BJ (cell line): ENCODE measurements at regions of chr2 and their contacts with region 1.

Region 1: GRCh38 chr2:17851731-17852585 is 26.5 kb upstream of the KCNS3 start:
- DNase-seq: peak; percentile 11
- H3K4me3 ChIP-seq: no peak overlapping the region
- H3K27me3 ChIP-seq: no peaks in the 10 kb centered on the region
- CTCF ChIP-seq: peak; percentile 93

Region 2: DNA sequence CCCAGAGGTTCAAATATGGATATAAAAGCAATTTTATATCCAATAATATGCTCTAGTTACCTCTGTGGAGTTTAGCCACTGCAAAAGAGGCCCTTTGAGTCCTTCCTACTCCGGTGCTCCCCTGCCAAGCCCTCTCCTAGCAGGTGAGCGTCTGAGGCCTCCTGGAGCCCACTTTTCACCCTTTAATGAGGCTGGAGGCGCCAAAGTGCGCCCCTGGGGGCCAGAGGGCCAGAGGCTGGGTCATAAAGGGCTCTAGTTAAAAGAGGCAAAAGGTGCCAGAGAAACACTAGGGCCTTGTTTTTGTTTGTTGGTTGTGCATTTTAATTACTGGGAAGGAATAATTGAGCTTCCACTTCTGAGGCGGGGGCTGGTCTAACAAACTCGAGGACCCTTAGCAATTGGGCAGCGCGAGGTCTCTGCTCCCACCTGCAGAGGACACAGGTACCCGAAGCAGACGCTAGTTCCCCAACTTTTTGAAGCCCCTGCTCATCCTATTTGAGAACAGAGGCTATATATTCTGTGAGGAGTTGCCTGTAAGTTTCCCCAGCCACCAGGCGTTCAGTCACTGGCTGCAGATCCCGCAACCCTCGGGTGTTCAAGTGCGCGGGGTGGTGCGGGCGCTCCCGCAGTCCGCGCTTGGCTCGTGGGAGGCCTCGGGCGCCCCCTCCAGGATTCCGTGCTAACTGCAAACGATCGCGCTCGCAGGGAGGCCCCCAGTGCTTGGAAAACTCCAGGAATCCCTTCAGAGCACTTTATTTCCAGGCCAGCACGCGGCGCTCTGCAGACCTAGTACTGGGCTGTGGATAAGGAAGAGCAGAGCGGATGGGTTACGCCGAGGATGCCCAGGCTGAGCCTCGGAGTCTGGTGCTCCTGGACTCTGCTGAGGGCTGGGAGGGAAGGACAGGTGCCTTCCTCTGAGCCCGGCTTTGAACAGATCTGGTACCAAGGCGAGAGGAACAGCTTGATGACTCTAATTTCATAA is 21.6 kb before region 1 on chr2:
- CTCF ChIA-PET with region 1: interaction called, 17 read pairs
- POLR2A ChIA-PET with region 1: no interaction called
- DNase-seq: peak; percentile 12
- H3K4me3 ChIP-seq: no peak overlapping the region
- H3K27me3 ChIP-seq: peaks cover 6% of the 10 kb centered on the region
- CTCF ChIP-seq: peak; percentile 95

Region 3: DNA sequence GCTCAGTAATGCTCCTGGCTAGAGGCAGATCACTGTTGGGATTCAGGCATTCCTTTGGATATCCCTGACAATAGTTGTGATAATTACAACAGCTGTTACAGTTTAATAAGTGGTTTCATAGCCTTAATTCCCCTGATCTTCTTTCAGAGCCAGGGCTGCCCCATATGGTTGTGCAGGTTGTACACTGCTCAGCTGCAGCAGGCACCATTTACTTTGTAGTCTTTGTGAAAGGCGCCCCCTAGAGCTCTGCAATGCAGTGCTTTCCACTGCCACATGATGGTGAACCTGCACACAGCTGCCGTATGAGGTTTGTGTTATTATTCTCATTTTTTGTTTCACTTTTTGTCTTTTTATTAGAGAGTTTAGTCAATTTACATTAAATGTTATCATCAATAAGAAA is 265.6 kb after region 1 on chr2:
- CTCF ChIA-PET with region 1: interaction called, 53 read pairs
- POLR2A ChIA-PET with region 1: no interaction called
- DNase-seq: no peak
- H3K4me3 ChIP-seq: no peak overlapping the region
- H3K27me3 ChIP-seq: no peaks in the 10 kb centered on the region; the same call in 1 of the 2 replicates
- CTCF ChIP-seq: peak; percentile 73

Region 4: GRCh38 chr2:18178736-18179349 is 326.9 kb after region 1 on chr2:
- CTCF ChIA-PET with region 1: interaction called, 11 read pairs
- POLR2A ChIA-PET with region 1: no interaction called
- DNase-seq: no peak
- H3K4me3 ChIP-seq: no peak overlapping the region
- H3K27me3 ChIP-seq: no peaks in the 10 kb centered on the region
- CTCF ChIP-seq: peak; percentile 70

Region 5: DNA sequence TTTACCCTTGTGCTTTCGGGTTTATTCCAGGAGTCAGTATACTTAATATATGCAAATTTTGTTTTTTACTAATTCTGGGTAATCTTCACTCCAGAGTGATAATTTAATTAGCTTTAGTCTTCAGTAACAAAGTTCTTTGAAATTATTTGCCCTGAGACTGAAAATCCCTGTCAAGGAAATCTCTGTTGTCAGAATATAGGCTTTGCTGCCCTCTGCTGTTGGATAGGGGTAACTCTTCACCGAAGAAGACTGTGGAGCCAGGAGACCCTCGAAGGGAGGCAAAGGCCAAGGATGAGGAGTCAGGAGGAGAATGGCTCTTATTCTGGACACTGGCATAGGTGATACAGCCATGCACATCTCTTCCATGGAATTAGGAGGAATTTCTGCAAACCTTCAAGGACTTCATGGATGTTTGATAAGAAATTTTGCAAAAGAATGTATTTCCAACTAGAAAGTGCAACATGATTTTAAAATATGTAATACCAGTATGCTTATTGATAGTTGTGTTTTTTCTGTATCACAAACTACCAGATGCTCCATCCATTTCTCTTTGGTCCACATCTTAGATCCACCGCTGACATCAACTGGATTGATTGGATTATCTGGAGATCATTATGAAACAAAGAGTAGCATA is 526.2 kb after region 1 on chr2:
- CTCF ChIA-PET with region 1: interaction called, 11 read pairs
- POLR2A ChIA-PET with region 1: no interaction called
- DNase-seq: no peak
- H3K4me3 ChIP-seq: no peak overlapping the region
- H3K27me3 ChIP-seq: no peaks in the 10 kb centered on the region; the same call in 1 of the 2 replicates
- CTCF ChIP-seq: peak; percentile 79